Activated B cell treated with CpG ODN at 0.5 μM for 24 hours (primary cell): ENCODE measurements at regions of chr13 and their contacts with region 1.

Region 1: DNA sequence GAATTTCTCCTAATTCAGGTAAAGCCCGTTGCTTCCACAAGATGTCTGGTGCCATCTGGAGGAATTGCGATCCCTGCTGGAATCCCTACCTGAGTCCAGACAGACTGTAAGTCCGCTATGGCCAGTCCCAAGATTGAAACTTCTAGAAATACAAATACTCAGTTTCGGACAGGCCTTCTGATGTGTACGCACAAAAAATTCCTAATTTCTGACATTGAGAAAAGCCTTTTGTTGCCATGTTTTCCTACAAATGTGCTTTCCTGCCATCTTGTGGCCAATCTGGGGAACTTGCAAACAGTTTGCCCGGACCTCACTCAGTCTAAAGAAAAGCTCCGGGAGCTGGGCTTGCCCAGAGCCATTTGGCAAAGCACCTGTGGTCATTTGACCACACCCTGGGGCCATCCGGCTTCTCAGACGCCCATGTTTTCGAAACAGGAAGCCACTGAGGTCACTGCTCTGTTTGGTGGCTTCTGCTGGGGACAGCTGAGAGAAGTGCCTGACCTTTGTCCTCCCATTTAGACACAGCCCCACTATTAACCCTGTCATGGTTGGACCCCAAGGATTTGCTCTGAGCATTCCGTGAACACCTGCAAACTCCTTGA is 79.4 kb downstream of the SLC15A1 start:
- DNase-seq: peak; percentile 19
- ATAC-seq: peak; percentile 56
- H3K4me3 Mint-ChIP-seq: no peak overlapping the region
- H3K27ac Mint-ChIP-seq: no peak overlapping the region
- H3K4me1 Mint-ChIP-seq: no peaks in the 10 kb centered on the region
- H3K27me3 Mint-ChIP-seq: peaks cover 7% of the 10 kb centered on the region
- CTCF ChIP-seq: peak; percentile 84

Region 2: GRCh38 chr13:97855570-97856303 is 817.3 kb before region 1 on chr13:
- CTCF ChIA-PET with region 1: interaction called, 6 read pairs
- POLR2A ChIA-PET with region 1: no interaction called
- intact Hi-C with region 1: loop called (anchors 1 kb)
- DNase-seq: no peak
- ATAC-seq: no peak
- H3K4me3 Mint-ChIP-seq: no peak overlapping the region
- H3K27ac Mint-ChIP-seq: no peak overlapping the region
- H3K4me1 Mint-ChIP-seq: peaks cover 8% of the 10 kb centered on the region
- H3K27me3 Mint-ChIP-seq: peaks cover 3% of the 10 kb centered on the region
- CTCF ChIP-seq: peak; percentile 23

Region 3: DNA sequence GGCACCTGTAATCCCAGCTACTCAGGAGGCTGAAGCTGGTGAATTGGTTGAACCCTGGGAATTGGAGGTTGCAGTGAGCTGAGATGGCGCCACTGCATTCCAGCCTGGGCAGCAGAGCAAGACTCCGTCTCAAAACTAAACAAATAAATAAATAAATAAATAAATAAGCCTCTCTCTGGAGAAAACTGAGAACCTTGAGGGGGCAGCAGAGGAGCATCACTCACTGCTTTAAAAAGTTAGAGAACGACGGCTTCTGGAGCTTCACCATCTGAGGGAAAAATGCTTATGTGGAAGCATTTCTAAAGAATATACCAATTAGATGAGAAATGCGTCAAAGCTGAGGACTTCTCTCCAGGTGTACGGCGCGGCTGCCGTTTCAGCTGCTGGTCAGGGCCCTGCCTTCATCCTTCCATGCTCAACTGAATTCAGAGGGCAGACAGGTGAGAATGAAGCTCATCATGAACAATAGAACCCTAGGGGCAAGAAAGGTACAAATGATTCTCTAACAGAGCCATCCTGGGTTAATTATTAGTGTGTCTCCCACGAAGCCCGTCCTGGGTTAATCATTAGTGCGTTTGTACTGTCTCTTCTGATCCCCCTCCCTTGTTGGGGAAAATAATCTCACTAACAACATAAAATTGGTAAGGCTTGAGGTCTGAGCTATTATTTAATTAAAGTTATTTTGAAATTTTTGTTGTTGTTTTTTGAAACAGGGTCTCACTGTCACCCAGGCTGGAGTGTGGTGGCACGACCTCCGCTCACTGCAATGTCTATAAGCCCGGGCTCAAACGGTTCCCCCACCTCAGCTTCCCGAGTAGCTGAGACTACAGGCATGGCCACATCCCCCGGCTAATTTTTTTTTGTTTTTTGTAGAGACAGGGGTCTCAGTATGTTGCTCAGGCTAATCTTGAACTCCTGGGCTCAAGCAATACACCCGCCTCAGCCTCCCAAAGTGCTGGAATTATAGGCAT is 639.5 kb before region 1 on chr13:
- CTCF ChIA-PET with region 1: no interaction called
- POLR2A ChIA-PET with region 1: no interaction called
- intact Hi-C with region 1: loop called (anchors 5 kb)
- DNase-seq: no peak
- ATAC-seq: no peak
- H3K4me3 Mint-ChIP-seq: no peak overlapping the region
- H3K27ac Mint-ChIP-seq: no peak overlapping the region
- H3K4me1 Mint-ChIP-seq: no peaks in the 10 kb centered on the region
- H3K27me3 Mint-ChIP-seq: peaks cover 3% of the 10 kb centered on the region
- CTCF ChIP-seq: no peak

Region 4: GRCh38 chr13:98142380-98143156 is 530.5 kb before region 1 on chr13 and contains the start of gene FARP1:
- CTCF ChIA-PET with region 1: no interaction called
- POLR2A ChIA-PET with region 1: no interaction called
- intact Hi-C with region 1: loop called (anchors 10 kb)
- DNase-seq: peak; percentile 32
- ATAC-seq: peak; percentile 72
- H3K4me3 Mint-ChIP-seq: peak within 1 kb of the TSS; percentile 70
- H3K27ac Mint-ChIP-seq: no peak within 1 kb of the TSS
- H3K4me1 Mint-ChIP-seq: peaks cover 18% of the 10 kb centered on the region
- H3K27me3 Mint-ChIP-seq: peaks cover 44% of the 10 kb centered on the region
- CTCF ChIP-seq: no peak
- total RNA-seq, gene FARP1: 0.95 and 2.1 TPM in 2 replicates

Region 5: GRCh38 chr13:98445340-98446233 is 227.5 kb before region 1 on chr13:
- CTCF ChIA-PET with region 1: interaction called, 47 read pairs
- POLR2A ChIA-PET with region 1: no interaction called
- intact Hi-C with region 1: loop called (anchors 1 kb)
- DNase-seq: peak; percentile 71
- ATAC-seq: peak; percentile 98
- H3K4me3 Mint-ChIP-seq: peak overlapping the region; percentile 38
- H3K27ac Mint-ChIP-seq: peak overlapping the region; percentile 76
- H3K4me1 Mint-ChIP-seq: peaks cover 9% of the 10 kb centered on the region
- H3K27me3 Mint-ChIP-seq: no peaks in the 10 kb centered on the region
- CTCF ChIP-seq: peak; percentile 87

Region 6: GRCh38 chr13:98451676-98452470 is 221.2 kb before region 1 on chr13:
- CTCF ChIA-PET with region 1: interaction called, 47 read pairs
- POLR2A ChIA-PET with region 1: no interaction called
- intact Hi-C with region 1: no loop called
- DNase-seq: no peak
- ATAC-seq: no peak
- H3K4me3 Mint-ChIP-seq: no peak overlapping the region
- H3K27ac Mint-ChIP-seq: no peak overlapping the region
- H3K4me1 Mint-ChIP-seq: peaks cover 2% of the 10 kb centered on the region
- H3K27me3 Mint-ChIP-seq: no peaks in the 10 kb centered on the region
- CTCF ChIP-seq: no peak

Region 7: DNA sequence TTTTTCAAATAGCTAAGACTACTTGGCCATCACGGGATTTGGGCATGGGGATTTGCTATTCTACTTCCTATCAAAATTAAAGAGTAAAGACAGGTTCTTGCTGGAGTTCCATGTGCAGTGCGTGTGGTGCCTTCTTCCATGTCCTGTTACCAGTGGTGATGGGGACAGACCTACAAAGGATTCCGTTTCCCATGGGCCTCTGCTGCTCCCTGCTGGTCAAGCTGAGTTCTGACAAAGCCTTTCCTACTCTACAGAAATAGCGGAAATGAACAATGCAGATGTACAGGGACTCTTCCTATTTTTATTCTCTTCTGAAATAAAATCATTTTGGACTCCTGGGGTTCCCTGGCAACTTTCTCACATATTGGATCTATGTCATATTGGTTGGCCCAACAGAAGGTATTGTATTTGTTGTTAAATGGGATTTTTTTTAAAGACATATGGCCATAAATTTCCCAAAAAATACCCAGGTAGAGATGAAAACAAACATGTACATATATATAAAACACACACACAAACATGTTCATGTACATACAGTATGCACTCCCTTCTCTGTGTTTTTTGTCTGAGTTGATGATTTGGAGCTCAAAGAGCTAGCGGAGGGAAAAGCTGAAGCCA is 169.9 kb after region 1 on chr13:
- CTCF ChIA-PET with region 1: no interaction called
- POLR2A ChIA-PET with region 1: no interaction called
- intact Hi-C with region 1: loop called (anchors 5 kb)
- DNase-seq: peak; percentile 34
- ATAC-seq: peak; percentile 86
- H3K4me3 Mint-ChIP-seq: no peak overlapping the region
- H3K27ac Mint-ChIP-seq: no peak overlapping the region
- H3K4me1 Mint-ChIP-seq: no peaks in the 10 kb centered on the region
- H3K27me3 Mint-ChIP-seq: no peaks in the 10 kb centered on the region
- CTCF ChIP-seq: peak; percentile 37